Ascending aorta (tissue), 2 donors: ENCODE measurements at regions of chr7 and their contacts with region 1.

Region 1: GRCh38 chr7:41977151-41977651 is 259.8 kb downstream of the GLI3 start:
- DNase-seq: no peak
- H3K4me3 ChIP-seq: no peak overlapping the region
- H3K27ac ChIP-seq: no peak overlapping the region
- H3K4me1 ChIP-seq: peaks cover 0 to 9% of the 10 kb centered on the region in 2 donors
- H3K27me3 ChIP-seq: no peaks in the 10 kb centered on the region
- CTCF ChIP-seq: peak; percentile 35 to 76 (median 62)

Region 2: DNA sequence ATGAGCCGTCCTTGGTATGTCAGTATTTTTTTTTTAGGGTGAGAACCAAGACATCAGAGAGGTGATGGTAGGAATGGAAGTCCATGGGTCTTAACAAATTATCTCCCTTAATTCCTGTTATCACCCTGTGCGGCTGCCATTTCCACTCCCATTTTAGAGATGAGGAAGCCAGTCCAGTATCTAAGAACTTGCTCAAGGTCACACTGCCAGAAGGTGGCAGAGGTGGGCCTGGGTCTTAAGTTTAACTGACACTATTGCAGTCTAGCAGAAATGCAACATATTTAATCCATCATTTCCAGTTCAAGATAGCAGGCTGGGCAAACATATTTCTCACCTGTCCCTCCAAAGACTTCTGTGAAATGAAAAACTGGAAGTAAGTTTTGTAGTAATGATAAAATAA is 151.5 kb after region 1 on chr7:
- intact Hi-C with region 1: no loop called
- DNase-seq: no peak
- H3K4me3 ChIP-seq: no peak overlapping the region
- H3K27ac ChIP-seq: no peak overlapping the region
- H3K4me1 ChIP-seq: peaks cover 0 to 4% of the 10 kb centered on the region in 2 donors
- H3K27me3 ChIP-seq: no peaks in the 10 kb centered on the region
- CTCF ChIP-seq: no peak

Region 3: GRCh38 chr7:42690794-42691639 is 713.8 kb after region 1 on chr7:
- intact Hi-C with region 1: loop called (anchors 10 kb)
- DNase-seq: no peak
- H3K4me3 ChIP-seq: no peak overlapping the region
- H3K27ac ChIP-seq: no peak overlapping the region
- H3K4me1 ChIP-seq: peaks cover 0 to 4% of the 10 kb centered on the region in 2 donors
- H3K27me3 ChIP-seq: no peaks in the 10 kb centered on the region
- CTCF ChIP-seq: peak in 2 of 3 experiments; percentile 31 to 51

Region 4: GRCh38 chr7:42843205-42843800 is 866.1 kb after region 1 on chr7:
- intact Hi-C with region 1: loop called (anchors 5 kb)
- DNase-seq: no peak
- H3K4me3 ChIP-seq: no peak overlapping the region
- H3K27ac ChIP-seq: no peak overlapping the region
- H3K4me1 ChIP-seq: no peaks in the 10 kb centered on the region
- H3K27me3 ChIP-seq: no peaks in the 10 kb centered on the region
- CTCF ChIP-seq: peak; percentile 28 to 58 (median 37)